SK-N-SH (cell line): ENCODE measurements at regions of chr5 and their contacts with region 1.

Region 1: GRCh38 chr5:55936100-55936693 is 58.6 kb downstream of the IL6ST start:
- DNase-seq: peak; percentile 78
- H3K4me3 ChIP-seq: no peak overlapping the region
- H3K27ac ChIP-seq: peak overlapping the region in 1 of 2 experiments; percentile 16; a peak in 1 of 4 replicates
- H3K4me1 ChIP-seq: no peaks in the 10 kb centered on the region; a peak in 1 of 4 replicates
- H3K27me3 ChIP-seq: no peaks in the 10 kb centered on the region
- CTCF ChIP-seq: peak; percentile 98
- EP300 ChIP-seq: no peak
- RAD21 ChIP-seq: peak; percentile 96

Region 2: GRCh38 chr5:55680353-55680752 is 255.8 kb before region 1 on chr5:
- CTCF ChIA-PET with region 1: no interaction called
- POLR2A ChIA-PET with region 1: no interaction called
- DNase-seq: no peak
- H3K4me3 ChIP-seq: no peak overlapping the region
- H3K27ac ChIP-seq: peak overlapping the region in 1 of 2 experiments; percentile 3; a peak in 1 of 4 replicates
- H3K4me1 ChIP-seq: no peaks in the 10 kb centered on the region; a peak in 1 of 4 replicates
- H3K27me3 ChIP-seq: no peaks in the 10 kb centered on the region
- CTCF ChIP-seq: no peak
- EP300 ChIP-seq: no peak
- RAD21 ChIP-seq: no peak

Region 3: DNA sequence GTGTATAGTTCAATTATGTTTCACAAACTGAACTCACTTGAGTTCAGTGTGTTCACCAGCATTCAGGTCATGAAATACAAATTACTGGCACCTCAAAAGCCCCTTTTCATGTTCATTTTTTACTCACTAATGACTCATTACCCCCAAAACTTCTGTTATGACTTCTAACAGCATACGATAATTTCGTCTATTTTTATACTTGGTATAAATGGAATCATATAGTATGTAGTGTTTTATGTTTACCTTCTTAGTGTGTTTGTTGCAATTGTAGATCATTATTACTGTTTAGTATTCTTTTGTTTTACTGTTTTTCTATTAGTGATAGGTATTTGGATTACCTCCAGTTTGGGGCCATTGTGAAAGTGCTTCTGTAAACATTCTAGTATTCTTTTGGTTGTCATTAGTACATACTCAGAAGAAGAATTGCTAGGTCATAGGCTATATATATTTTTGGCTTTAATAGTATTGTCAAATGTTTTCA is 165.0 kb before region 1 on chr5:
- CTCF ChIA-PET with region 1: no interaction called
- POLR2A ChIA-PET with region 1: no interaction called
- DNase-seq: no peak
- H3K4me3 ChIP-seq: no peak overlapping the region
- H3K27ac ChIP-seq: no peak overlapping the region
- H3K4me1 ChIP-seq: no peaks in the 10 kb centered on the region
- H3K27me3 ChIP-seq: no peaks in the 10 kb centered on the region
- CTCF ChIP-seq: no peak
- EP300 ChIP-seq: no peak
- RAD21 ChIP-seq: no peak

Region 4: GRCh38 chr5:56148453-56148971 is 212.3 kb after region 1 on chr5:
- CTCF ChIA-PET with region 1: no interaction called
- POLR2A ChIA-PET with region 1: no interaction called
- DNase-seq: no peak
- H3K4me3 ChIP-seq: no peak overlapping the region
- H3K27ac ChIP-seq: no peak overlapping the region
- H3K4me1 ChIP-seq: peaks cover 0 to 2% of the 10 kb centered on the region in 2 experiments; a peak in 2 of 4 replicates
- H3K27me3 ChIP-seq: no peaks in the 10 kb centered on the region
- CTCF ChIP-seq: no peak
- EP300 ChIP-seq: no peak
- RAD21 ChIP-seq: no peak

Region 5: GRCh38 chr5:56200856-56201666 is 264.9 kb after region 1 on chr5:
- CTCF ChIA-PET with region 1: interaction called, 77 read pairs
- POLR2A ChIA-PET with region 1: no interaction called
- DNase-seq: peak; percentile 74
- H3K4me3 ChIP-seq: no peak overlapping the region
- H3K27ac ChIP-seq: no peak overlapping the region
- H3K4me1 ChIP-seq: peaks cover 0 to under 1% of the 10 kb centered on the region in 2 experiments; a peak in 1 of 4 replicates
- H3K27me3 ChIP-seq: no peaks in the 10 kb centered on the region
- CTCF ChIP-seq: peak; percentile 85
- EP300 ChIP-seq: no peak
- RAD21 ChIP-seq: peak; percentile 97

Region 6: DNA sequence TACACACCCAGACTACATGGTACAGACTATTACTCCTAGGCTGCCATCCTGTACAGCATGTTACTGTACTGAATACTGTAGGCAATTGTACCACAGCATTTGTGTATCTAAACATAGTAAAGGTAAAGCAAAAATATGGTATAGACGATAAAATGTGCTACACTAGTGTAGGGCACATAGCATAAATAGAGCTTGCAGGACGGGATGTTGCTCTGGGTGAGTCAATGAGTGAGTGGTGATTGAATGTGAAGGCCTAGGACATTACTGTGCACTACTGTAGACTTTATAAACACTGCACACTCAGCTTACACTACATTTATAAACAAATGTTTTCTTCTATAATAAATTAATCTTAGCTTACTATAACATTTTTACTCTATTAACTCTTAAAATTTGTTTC is 271.3 kb after region 1 on chr5:
- CTCF ChIA-PET with region 1: interaction called, 77 read pairs
- POLR2A ChIA-PET with region 1: no interaction called
- DNase-seq: no peak
- H3K4me3 ChIP-seq: no peak overlapping the region
- H3K27ac ChIP-seq: no peak overlapping the region
- H3K4me1 ChIP-seq: no peaks in the 10 kb centered on the region
- H3K27me3 ChIP-seq: no peaks in the 10 kb centered on the region
- CTCF ChIP-seq: no peak
- EP300 ChIP-seq: no peak
- RAD21 ChIP-seq: no peak

Region 7: GRCh38 chr5:56264417-56265025 is 328.3 kb after region 1 on chr5:
- CTCF ChIA-PET with region 1: interaction called, 56 read pairs
- POLR2A ChIA-PET with region 1: no interaction called
- DNase-seq: peak; percentile 56
- H3K4me3 ChIP-seq: no peak overlapping the region
- H3K27ac ChIP-seq: no peak overlapping the region
- H3K4me1 ChIP-seq: peaks cover 0 to 7% of the 10 kb centered on the region in 2 experiments; a peak in 1 of 4 replicates
- H3K27me3 ChIP-seq: no peaks in the 10 kb centered on the region
- CTCF ChIP-seq: peak; percentile 58
- EP300 ChIP-seq: no peak
- RAD21 ChIP-seq: peak; percentile 77